ENCODE measurements at regions of chr3 and their contacts with region 1.

Region 1: DNA sequence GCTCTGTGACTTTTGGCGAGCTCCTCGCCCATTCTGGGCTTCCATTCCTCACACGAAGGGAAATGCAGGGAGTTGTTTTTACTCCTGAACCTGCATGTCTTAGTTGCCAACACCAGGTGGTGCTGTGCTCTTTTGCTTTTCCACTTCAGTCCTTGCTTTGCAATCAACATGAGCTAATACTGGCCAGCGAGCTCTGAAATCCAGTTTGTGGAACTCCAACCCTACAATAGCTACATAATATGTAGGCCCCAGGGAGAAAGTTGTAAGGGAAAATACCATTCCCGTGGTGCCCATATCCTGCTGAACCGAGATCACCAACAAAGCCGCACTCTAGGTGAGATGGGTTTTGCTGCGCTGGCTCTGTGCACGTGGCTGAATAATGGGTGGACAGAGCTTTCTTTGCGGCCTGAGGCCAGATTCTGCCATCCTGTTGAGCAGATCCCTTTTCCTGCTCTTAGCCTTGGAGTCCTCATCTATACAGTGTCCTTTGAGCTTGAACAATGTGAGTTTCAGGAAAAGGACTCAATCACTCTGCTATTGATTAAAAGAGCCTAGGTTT is 25.0 kb downstream of the LSM3 start:
- DNase-seq: peak; percentile 58 to 71
- ATAC-seq: peak; percentile 78 to 85 (median 82)
- H3K4me3 ChIP-seq: no peak overlapping the region
- H3K27ac ChIP-seq: peak overlapping the region; percentile 84
- H3K4me1 ChIP-seq: peaks cover 27% of the 10 kb centered on the region
- H3K27me3 ChIP-seq: no peaks in the 10 kb centered on the region
- CTCF ChIP-seq: peak; percentile 87

Region 2: DNA sequence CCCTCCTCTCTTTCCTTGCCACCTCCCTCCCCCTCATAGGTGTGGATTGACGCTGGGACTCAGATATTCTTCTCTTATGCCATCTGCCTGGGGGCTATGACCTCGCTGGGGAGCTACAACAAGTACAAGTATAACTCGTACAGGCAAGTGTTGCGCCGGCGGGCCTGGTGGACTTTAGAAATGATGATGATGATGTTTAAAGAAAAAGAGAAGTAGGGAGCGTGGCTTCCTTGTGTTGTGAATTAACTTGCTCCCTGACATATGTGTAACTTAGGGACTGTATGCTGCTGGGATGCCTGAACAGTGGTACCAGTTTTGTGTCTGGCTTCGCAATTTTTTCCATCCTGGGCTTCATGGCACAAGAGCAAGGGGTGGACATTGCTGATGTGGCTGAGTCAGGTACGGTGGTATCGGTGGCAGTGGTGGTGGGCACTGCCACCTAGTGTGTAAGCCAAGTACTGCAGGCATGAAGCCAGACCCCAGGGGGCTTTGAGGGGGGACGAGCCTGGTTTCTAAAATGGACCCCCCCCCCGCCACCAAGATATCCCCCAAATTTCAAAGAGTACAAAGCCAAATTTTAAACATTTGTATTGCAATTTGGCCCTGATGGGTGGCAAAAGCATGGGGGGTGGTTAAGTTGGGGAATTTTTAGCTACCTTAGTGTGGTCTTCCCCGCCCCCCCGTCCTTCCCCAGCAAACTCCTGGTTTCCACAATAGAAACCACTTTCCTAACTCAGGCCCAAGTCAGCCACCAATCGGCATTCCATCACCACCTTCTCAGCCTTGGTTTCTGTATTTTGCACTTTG is 264.4 kb after region 1 on chr3:
- intact Hi-C with region 1: loop called (anchors 1 to 2 kb)
- DNase-seq: no peak
- ATAC-seq: peak; percentile 64 to 84 (median 72)
- H3K4me3 ChIP-seq: no peak overlapping the region
- H3K27ac ChIP-seq: no peak overlapping the region
- H3K4me1 ChIP-seq: peaks cover 8% of the 10 kb centered on the region
- H3K27me3 ChIP-seq: no peaks in the 10 kb centered on the region
- CTCF ChIP-seq: peak; percentile 86

Region 3: DNA sequence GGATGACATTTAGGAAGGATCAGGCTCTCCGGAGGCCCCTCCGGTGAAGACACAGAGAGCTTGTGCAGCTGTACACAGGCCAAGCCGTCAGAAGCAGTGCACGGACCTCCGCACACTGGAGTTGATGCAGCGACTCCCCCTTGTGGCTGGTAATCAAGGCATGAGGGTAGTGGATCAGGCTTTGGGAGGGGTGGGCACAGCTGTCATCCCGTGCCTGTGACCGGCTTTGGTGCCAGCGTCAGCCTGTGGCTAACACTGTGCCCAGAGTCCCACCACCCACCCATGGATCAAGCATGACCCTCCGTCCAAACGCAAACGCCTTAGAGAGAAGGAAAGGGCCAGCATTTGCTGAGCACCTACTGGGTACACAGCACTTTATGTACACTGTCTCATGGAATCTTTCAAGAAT is 344.7 kb after region 1 on chr3:
- intact Hi-C with region 1: loop called in 1 of 2 experiments (anchors 5 kb)
- DNase-seq: peak; percentile 75 to 88
- ATAC-seq: peak; percentile 90 to 94 (median 92)
- H3K4me3 ChIP-seq: no peak overlapping the region
- H3K27ac ChIP-seq: peak overlapping the region; percentile 32
- H3K4me1 ChIP-seq: peaks cover 9% of the 10 kb centered on the region
- H3K27me3 ChIP-seq: no peaks in the 10 kb centered on the region
- CTCF ChIP-seq: peak; percentile 78